Heart left ventricle (tissue), 16 donors: ENCODE measurements at regions of chr11 and their contacts with region 1.

Region 1: DNA sequence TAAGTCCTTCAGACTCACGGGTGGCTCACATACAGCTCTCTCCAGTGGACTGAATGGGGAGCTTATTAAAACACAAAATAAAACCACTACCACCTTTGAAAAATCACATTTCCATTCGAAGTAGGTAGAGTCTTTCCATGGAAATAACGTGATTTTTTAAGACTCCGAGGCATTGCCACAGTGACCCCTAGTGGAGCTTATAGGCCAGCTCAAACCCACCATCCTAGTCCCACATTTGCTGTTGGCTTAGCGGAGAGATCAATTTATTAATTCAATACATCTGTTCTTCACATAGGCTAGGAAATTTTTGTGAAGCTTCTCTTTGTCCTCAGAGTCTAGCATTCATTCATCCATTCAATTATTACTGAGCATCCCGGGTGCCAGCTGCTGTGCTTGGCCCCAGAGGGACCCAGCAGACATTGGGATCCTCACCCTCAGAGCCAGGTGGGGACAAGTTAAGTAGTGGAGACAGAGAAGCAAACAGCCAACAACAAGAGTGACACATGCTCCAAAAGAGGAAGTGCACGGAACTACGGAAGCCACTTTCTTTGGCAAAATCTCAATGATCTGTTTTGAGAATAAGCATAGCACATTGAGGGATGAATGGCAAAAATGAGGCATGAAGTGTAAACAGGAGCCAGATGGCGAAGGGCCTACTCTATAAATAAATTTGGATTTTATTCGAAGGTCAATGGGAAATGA is 10.2 kb upstream of the P4HA3 start:
- DNase-seq: no peak
- ATAC-seq: peak in 2 of 4 donors; percentile 19 to 38
- H3K4me3 ChIP-seq: no peak overlapping the region
- H3K27ac ChIP-seq: peak overlapping the region in 1 of 12 donors; percentile 4
- H3K4me1 ChIP-seq: peaks cover 0 to 45% (median 27%) of the 10 kb centered on the region in 12 donors
- H3K27me3 ChIP-seq: no peaks in the 10 kb centered on the region
- CTCF ChIP-seq: peak; percentile 34 to 58 (median 48)
- POLR2A ChIP-seq: no peak

Region 2: GRCh38 chr11:74398244-74399159 is 76.9 kb after region 1 on chr11 and contains the start of gene PGM2L1:
- intact Hi-C with region 1: loop called in 1 of 10 experiments (anchors 5 kb)
- DNase-seq: peak; percentile 94 to 96 (median 96)
- ATAC-seq: peak; percentile 99
- H3K4me3 ChIP-seq: peak within 1 kb of the TSS; percentile 69 to 94 (median 81)
- H3K27ac ChIP-seq: peak within 1 kb of the TSS in 11 of 12 donors; percentile 69 to 94 (median 85)
- H3K4me1 ChIP-seq: peaks cover 0 to 9% (median 5%) of the 10 kb centered on the region in 12 donors
- H3K27me3 ChIP-seq: no peaks in the 10 kb centered on the region
- CTCF ChIP-seq: no peak
- POLR2A ChIP-seq: peak in 1 of 2 donors; percentile 54
- total RNA-seq, gene PGM2L1: 1.4 to 3.1 (median 1.8) TPM